ENCODE measurements at regions of chr4 and their contacts with region 1.

Region 1: GRCh38 chr4:28001698-28002097 is 1141.1 kb downstream of the STIM2 start:
- DNase-seq: no peak
- H3K4me3 ChIP-seq: no peak overlapping the region
- H3K27ac ChIP-seq: no peak overlapping the region
- H3K27me3 ChIP-seq: no peaks in the 10 kb centered on the region
- CTCF ChIP-seq: no peak

Region 2: DNA sequence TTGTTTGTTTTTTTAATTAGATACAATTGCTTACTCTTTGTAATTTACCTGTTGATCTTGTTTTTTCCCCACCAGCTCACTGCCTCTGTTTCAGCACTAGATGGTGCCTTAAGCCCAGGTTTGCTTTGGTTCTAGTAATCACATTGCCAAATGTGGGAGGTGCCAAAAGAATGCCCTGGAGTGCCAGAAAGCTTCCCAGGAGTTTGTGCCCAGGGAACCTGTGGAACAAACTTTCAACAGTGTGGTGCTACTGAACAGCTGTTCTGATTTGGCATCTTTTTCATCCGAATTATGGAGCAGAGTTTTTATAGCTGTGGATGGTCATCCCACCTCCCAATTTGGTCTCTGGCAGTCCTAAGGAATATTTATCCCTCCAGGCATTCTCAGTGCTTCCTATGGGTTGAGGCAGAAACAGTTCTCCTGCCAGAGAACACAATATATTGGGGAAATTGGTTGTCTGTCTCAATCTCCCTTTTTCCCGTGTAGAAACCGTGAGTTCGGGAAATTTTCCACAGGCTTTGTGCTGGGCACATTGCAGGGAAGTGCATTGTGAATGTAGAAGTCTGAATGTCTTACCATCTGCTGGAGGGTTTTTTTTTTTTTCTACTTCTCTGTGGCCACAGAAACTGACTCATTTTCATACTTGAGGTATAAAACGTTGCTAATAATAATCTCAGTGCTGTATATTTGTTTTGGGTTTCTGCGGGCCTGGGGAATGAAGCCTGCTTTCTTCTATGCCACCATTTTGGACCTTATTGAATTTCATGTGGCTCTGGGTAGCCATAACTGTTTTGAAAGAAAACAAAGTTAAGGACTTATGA is 140.1 kb before region 1 on chr4:
- intact Hi-C with region 1: no loop called
- DNase-seq: peak in 1 of 10 donors; percentile 31
- H3K4me3 ChIP-seq: no peak overlapping the region
- H3K27ac ChIP-seq: no peak overlapping the region
- H3K27me3 ChIP-seq: no peaks in the 10 kb centered on the region
- CTCF ChIP-seq: peak in 55 of 56 donors; percentile 23 to 72 (median 52)

Region 3: GRCh38 chr4:27908356-27908755 is 93.3 kb before region 1 on chr4:
- intact Hi-C with region 1: no loop called
- DNase-seq: no peak
- H3K4me3 ChIP-seq: no peak overlapping the region
- H3K27ac ChIP-seq: no peak overlapping the region
- H3K27me3 ChIP-seq: no peaks in the 10 kb centered on the region
- CTCF ChIP-seq: no peak

Region 4: GRCh38 chr4:27921231-27921630 is 80.5 kb before region 1 on chr4:
- intact Hi-C with region 1: loop called in 1 of 2 experiments (anchors 5 kb)
- DNase-seq: no peak
- H3K4me3 ChIP-seq: no peak overlapping the region
- H3K27ac ChIP-seq: no peak overlapping the region
- H3K27me3 ChIP-seq: no peaks in the 10 kb centered on the region
- CTCF ChIP-seq: no peak